ENCODE measurements at regions of chr9 and their contacts with region 1.

Region 1: GRCh38 chr9:85610074-85610860 is 131.5 kb downstream of the AGTPBP1 start:
- DNase-seq: peak; percentile 74
- H3K4me3 ChIP-seq: peak overlapping the region in 1 of 2 experiments; percentile 18; a peak in 1 of 4 replicates
- H3K27ac ChIP-seq: peak overlapping the region; percentile 12 to 40; a peak in 1 of 4 replicates
- H3K4me1 ChIP-seq: no peaks in the 10 kb centered on the region; a peak in 1 of 4 replicates
- H3K27me3 ChIP-seq: no peaks in the 10 kb centered on the region
- CTCF ChIP-seq: peak; percentile 91
- EP300 ChIP-seq: no peak
- RAD21 ChIP-seq: peak; percentile 92

Region 2: GRCh38 chr9:84397151-84397728 is 1213.0 kb before region 1 on chr9:
- CTCF ChIA-PET with region 1: interaction called, 27 read pairs
- POLR2A ChIA-PET with region 1: no interaction called
- DNase-seq: peak; percentile 82
- H3K4me3 ChIP-seq: peak overlapping the region in 1 of 2 experiments; percentile 13; a peak in 1 of 4 replicates
- H3K27ac ChIP-seq: no peak overlapping the region
- H3K4me1 ChIP-seq: peaks cover 0 to 3% of the 10 kb centered on the region in 2 experiments; a peak in 1 of 4 replicates
- H3K27me3 ChIP-seq: no peaks in the 10 kb centered on the region
- CTCF ChIP-seq: peak; percentile 88
- EP300 ChIP-seq: no peak
- RAD21 ChIP-seq: peak; percentile 98

Region 3: DNA sequence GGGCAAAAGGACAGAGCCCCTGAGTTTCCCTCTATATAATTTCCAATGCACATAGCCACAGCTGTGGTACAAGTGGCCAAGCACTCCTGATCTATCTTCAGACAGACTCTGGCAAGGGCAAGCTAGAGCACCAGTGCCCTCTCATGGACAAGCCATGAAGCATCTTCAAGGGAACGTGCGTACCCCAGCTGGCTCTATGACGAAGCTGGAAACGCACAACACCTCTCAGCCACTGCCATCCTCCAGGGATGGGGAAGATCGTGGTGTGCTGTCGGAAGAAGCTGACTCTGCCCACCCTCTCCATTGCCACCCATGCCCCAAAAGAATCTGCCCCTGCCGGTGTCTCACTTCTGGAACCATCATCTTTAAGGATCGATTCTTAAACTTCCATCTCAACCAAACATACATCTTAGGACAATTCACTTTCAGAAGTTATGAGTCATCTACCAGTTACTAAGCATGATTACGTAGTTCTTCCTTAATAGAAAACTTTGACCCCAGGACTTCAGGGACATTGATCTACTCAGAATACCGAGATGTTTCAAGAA is 351.4 kb before region 1 on chr9:
- CTCF ChIA-PET with region 1: interaction called, 17 read pairs
- POLR2A ChIA-PET with region 1: no interaction called
- DNase-seq: peak; percentile 69
- H3K4me3 ChIP-seq: no peak overlapping the region; a peak in 1 of 4 replicates
- H3K27ac ChIP-seq: no peak overlapping the region
- H3K4me1 ChIP-seq: peaks cover 0 to 5% of the 10 kb centered on the region in 2 experiments; a peak in 2 of 4 replicates
- H3K27me3 ChIP-seq: no peaks in the 10 kb centered on the region
- CTCF ChIP-seq: peak; percentile 75
- EP300 ChIP-seq: no peak
- RAD21 ChIP-seq: peak; percentile 97

Region 4: GRCh38 chr9:85508616-85509015 is 101.7 kb before region 1 on chr9:
- CTCF ChIA-PET with region 1: interaction called, 11 read pairs
- POLR2A ChIA-PET with region 1: no interaction called
- DNase-seq: no peak
- H3K4me3 ChIP-seq: no peak overlapping the region
- H3K27ac ChIP-seq: no peak overlapping the region
- H3K4me1 ChIP-seq: peaks cover 0 to 22% of the 10 kb centered on the region in 2 experiments; a peak in 1 of 4 replicates
- H3K27me3 ChIP-seq: no peaks in the 10 kb centered on the region
- CTCF ChIP-seq: no peak
- EP300 ChIP-seq: no peak
- RAD21 ChIP-seq: no peak

Region 5: GRCh38 chr9:85569988-85570387 is 40.3 kb before region 1 on chr9:
- CTCF ChIA-PET with region 1: interaction called, 14 read pairs
- POLR2A ChIA-PET with region 1: no interaction called
- DNase-seq: no peak
- H3K4me3 ChIP-seq: no peak overlapping the region
- H3K27ac ChIP-seq: no peak overlapping the region
- H3K4me1 ChIP-seq: no peaks in the 10 kb centered on the region
- H3K27me3 ChIP-seq: no peaks in the 10 kb centered on the region
- CTCF ChIP-seq: no peak
- EP300 ChIP-seq: no peak
- RAD21 ChIP-seq: no peak

Region 6: GRCh38 chr9:85586684-85587083 is 23.6 kb before region 1 on chr9:
- CTCF ChIA-PET with region 1: interaction called, 10 read pairs
- POLR2A ChIA-PET with region 1: no interaction called
- DNase-seq: no peak
- H3K4me3 ChIP-seq: no peak overlapping the region
- H3K27ac ChIP-seq: no peak overlapping the region
- H3K4me1 ChIP-seq: no peaks in the 10 kb centered on the region; a peak in 2 of 4 replicates
- H3K27me3 ChIP-seq: no peaks in the 10 kb centered on the region
- CTCF ChIP-seq: no peak
- EP300 ChIP-seq: no peak
- RAD21 ChIP-seq: no peak

Region 7: GRCh38 chr9:85647571-85647970 is 37.3 kb after region 1 on chr9:
- CTCF ChIA-PET with region 1: interaction called, 11 read pairs
- POLR2A ChIA-PET with region 1: interaction called, 3 read pairs
- DNase-seq: no peak
- H3K4me3 ChIP-seq: no peak overlapping the region
- H3K27ac ChIP-seq: no peak overlapping the region
- H3K4me1 ChIP-seq: no peaks in the 10 kb centered on the region; a peak in 1 of 4 replicates
- H3K27me3 ChIP-seq: no peaks in the 10 kb centered on the region
- CTCF ChIP-seq: no peak
- EP300 ChIP-seq: no peak
- RAD21 ChIP-seq: no peak